ENCODE measurements at regions of chr1 and their contacts with region 1.

Region 1: GRCh38 chr1:61077676-61078541 is 4.5 kb upstream of the NFIA start:
- DNase-seq: peak; percentile 92

Region 2: DNA sequence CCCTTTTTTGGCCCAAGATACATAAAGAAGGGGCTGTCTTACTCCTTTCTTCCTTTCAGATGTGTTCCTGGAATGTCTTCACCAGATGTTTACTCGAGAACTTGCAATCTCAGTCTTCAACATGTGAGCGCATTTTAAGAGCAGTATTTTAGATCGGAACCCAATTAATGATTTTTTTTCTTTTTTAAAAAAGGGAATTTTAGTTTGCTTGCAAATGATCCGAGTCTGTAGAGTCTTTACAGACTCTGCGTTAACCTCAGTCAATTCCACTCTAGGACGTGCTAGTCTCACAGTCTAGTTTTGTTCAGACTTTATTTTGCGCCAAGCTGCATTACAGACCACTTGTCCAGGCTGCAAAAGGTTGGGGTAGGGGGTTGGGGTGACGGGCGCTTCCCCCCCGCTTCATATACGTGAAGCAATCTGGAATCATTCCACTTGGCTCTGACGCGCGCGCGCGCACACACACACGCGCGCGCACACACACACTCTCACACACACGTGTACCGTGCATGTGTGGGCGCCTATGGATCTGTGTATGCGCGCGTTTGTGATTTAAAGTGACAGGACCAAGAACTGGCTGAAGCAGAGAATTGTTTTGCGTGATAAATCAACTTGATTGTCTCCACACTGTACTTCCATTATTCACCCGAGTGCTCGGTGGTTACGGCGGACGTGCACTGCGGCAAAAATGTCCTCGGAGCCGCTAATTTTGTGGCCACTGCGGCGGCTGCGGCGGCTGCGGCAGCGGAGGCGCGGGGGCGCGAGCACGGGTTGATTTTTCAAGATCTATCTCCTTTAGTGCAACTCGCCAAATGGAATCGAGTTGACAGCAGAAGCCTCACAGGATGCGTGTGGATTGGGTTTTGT is 21.1 kb before region 1 on chr1:
- intact Hi-C with region 1: loop called (anchors 1 kb)
- DNase-seq: peak; percentile 79

Region 3: GRCh38 chr1:61097317-61097716 is 19.4 kb after region 1 on chr1:
- intact Hi-C with region 1: no loop called
- DNase-seq: no peak

Region 4: GRCh38 chr1:61184040-61184713 is 106.3 kb after region 1 on chr1:
- intact Hi-C with region 1: loop called (anchors 2 kb)
- DNase-seq: peak; percentile 93

Region 5: DNA sequence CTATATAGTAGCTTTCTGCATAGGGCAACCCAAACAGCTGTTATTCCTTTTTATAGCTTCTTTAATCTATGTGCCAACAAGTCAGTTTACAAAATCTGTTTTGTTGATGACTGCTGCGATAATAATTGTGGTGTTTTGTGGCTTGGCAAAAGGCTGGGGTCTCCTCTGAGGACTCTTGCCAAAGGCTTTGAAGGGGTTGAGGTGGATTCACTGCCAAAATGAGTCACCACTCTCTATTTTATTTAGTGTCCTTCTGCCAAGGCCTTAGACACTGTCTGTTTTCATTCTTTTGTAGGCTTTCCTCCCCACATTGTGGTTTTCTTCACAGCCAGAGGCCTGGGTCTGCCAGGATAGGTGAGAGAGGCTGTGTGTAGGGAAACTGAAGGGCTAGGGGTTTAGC is 166.2 kb after region 1 on chr1:
- intact Hi-C with region 1: loop called (anchors 5 kb)
- DNase-seq: no peak

Region 6: GRCh38 chr1:61337981-61338848 is 260.3 kb after region 1 on chr1:
- intact Hi-C with region 1: loop called (anchors 1 kb)
- DNase-seq: peak; percentile 80

Region 7: GRCh38 chr1:61379693-61380092 is 301.8 kb after region 1 on chr1:
- intact Hi-C with region 1: loop called (anchors 5 kb)
- DNase-seq: no peak

Measured in cardiac septum (tissue), 1 donor.